Gastrocnemius medialis (tissue), 4 donors: ENCODE measurements at regions of chr6 and their contacts with region 1.

Region 1: DNA sequence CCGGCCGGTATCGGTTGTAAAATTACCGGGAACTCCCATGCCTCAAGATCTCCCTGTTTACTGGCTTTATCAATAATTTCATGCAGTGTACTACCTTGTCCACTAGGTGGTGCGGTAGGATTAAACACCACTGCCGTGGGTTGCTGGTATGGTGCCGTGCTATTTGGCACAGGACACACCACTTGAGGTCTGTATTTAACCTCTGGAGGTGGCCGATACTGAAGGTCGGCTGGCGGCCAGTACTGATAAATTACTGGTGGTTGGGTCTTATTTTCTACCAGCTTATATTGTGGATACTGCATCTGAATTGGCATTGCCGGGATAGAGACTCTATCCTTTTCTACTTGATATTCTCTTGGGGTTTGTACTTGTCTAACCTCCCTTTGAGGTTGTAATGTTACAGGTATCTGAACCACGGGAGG is 14.3 kb upstream of the PTCRA start:
- DNase-seq: peak; percentile 60 to 76
- ATAC-seq: peak; percentile 92 to 99
- H3K4me3 ChIP-seq: no peak overlapping the region
- H3K27ac ChIP-seq: no peak overlapping the region
- H3K4me1 ChIP-seq: peaks cover 20 to 27% of the 10 kb centered on the region in 2 donors
- H3K27me3 ChIP-seq: no peaks in the 10 kb centered on the region
- CTCF ChIP-seq: peak; percentile 85 to 93 (median 90)
- POLR2A ChIP-seq: no peak

Region 2: GRCh38 chr6:42661540-42662153 is 239.9 kb before region 1 on chr6:
- in situ Hi-C with region 1: no loop called
- intact Hi-C with region 1: loop called (anchors 2 kb)
- DNase-seq: peak; percentile 53 to 83
- ATAC-seq: peak; percentile 86 to 90
- H3K4me3 ChIP-seq: no peak overlapping the region
- H3K27ac ChIP-seq: peak overlapping the region in 3 of 4 donors; percentile 44 to 54 (median 49)
- H3K4me1 ChIP-seq: peaks cover 6 to 13% of the 10 kb centered on the region in 2 donors
- H3K27me3 ChIP-seq: no peaks in the 10 kb centered on the region
- CTCF ChIP-seq: peak; percentile 90 to 95 (median 92)
- POLR2A ChIP-seq: no peak

Region 3: GRCh38 chr6:42978839-42979522 is 77.4 kb after region 1 on chr6 and contains the start of gene PEX6:
- in situ Hi-C with region 1: no loop called
- intact Hi-C with region 1: loop called (anchors 5 kb)
- DNase-seq: peak; percentile 69 to 86
- ATAC-seq: peak; percentile 89 to 92
- H3K4me3 ChIP-seq: peak within 1 kb of the TSS; percentile 72 to 97 (median 81)
- H3K27ac ChIP-seq: peak within 1 kb of the TSS; percentile 85 to 97 (median 92)
- H3K4me1 ChIP-seq: peaks cover 25 to 27% of the 10 kb centered on the region in 2 donors
- H3K27me3 ChIP-seq: no peaks in the 10 kb centered on the region
- CTCF ChIP-seq: no peak
- POLR2A ChIP-seq: peak; percentile 40 to 71
- total RNA-seq, gene PEX6: 7.4 to 45.1 (median 12.6) TPM

Region 4: GRCh38 chr6:43059168-43060033 is 157.9 kb after region 1 on chr6 and contains the starts of genes KLC4 and MRPL2:
- in situ Hi-C with region 1: no loop called
- intact Hi-C with region 1: loop called (anchors 5 kb)
- DNase-seq: peak; percentile 99
- ATAC-seq: peak; percentile 94 to 97
- H3K4me3 ChIP-seq: peak within 1 kb of the TSS; percentile 87 to 98 (median 92)
- H3K27ac ChIP-seq: peak within 1 kb of the TSS; percentile 90 to 99 (median 95)
- H3K4me1 ChIP-seq: peaks cover 24 to 30% of the 10 kb centered on the region in 2 donors
- H3K27me3 ChIP-seq: no peaks in the 10 kb centered on the region
- CTCF ChIP-seq: no peak
- POLR2A ChIP-seq: peak; percentile 72 to 88
- total RNA-seq, gene KLC4: 12.2 to 19.3 (median 14.6) TPM
- total RNA-seq, gene MRPL2: 34.1 to 64.9 (median 41.1) TPM

Region 5: DNA sequence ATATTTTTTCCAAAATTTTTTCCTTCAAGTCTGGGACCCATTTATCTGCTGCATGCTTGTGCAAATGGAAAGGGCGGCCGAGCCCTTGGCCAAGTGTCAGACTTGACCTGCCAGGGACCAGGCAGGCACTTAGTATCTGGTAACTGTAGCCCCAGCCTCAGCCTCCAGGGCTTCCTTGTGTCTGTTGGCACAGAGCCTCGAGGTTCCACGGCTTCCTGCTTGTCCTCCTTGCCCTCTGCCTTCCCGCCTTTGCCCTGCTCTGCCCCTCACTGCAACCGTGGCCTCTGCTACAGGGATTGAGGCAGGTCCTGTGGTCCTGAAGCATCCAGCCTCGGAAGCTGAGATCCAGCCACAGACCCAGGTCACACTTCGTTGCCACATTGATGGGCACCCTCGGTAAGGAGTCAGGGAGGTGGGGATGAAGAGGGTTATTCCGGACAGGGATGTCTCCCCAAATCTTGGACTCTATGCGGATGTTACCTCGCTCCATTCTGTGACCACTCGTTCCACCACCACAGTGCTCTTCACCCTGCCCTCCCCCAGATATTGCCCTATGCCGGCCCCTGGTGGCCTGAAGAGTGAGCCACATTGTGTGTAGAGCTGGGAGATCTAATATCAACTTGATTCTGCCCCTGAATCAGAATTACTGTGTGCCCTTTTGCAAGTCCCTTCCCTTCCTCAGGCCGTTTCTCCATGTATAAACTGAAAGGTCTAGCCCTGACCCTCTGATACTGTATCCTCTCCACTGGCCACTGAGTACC is 228.1 kb after region 1 on chr6:
- in situ Hi-C with region 1: no loop called
- intact Hi-C with region 1: loop called (anchors 5 kb)
- DNase-seq: no peak
- ATAC-seq: peak in 1 of 2 donors; percentile 55
- H3K4me3 ChIP-seq: no peak overlapping the region
- H3K27ac ChIP-seq: no peak overlapping the region
- H3K4me1 ChIP-seq: no peaks in the 10 kb centered on the region
- H3K27me3 ChIP-seq: no peaks in the 10 kb centered on the region
- CTCF ChIP-seq: peak in 3 of 5 experiments; percentile 20 to 32 (median 31)
- POLR2A ChIP-seq: no peak

Region 6: GRCh38 chr6:43143235-43144124 is 241.9 kb after region 1 on chr6:
- in situ Hi-C with region 1: loop called (anchors 5 to 10 kb)
- intact Hi-C with region 1: loop called (anchors 1 kb)
- DNase-seq: peak; percentile 46 to 80
- ATAC-seq: peak; percentile 81 to 86
- H3K4me3 ChIP-seq: peak overlapping the region in 1 of 4 donors; percentile 5
- H3K27ac ChIP-seq: peak overlapping the region in 2 of 4 donors; percentile 31 to 50
- H3K4me1 ChIP-seq: peaks cover 21 to 24% of the 10 kb centered on the region in 2 donors
- H3K27me3 ChIP-seq: no peaks in the 10 kb centered on the region
- CTCF ChIP-seq: peak; percentile 87 to 96 (median 94)
- POLR2A ChIP-seq: no peak

Region 7: DNA sequence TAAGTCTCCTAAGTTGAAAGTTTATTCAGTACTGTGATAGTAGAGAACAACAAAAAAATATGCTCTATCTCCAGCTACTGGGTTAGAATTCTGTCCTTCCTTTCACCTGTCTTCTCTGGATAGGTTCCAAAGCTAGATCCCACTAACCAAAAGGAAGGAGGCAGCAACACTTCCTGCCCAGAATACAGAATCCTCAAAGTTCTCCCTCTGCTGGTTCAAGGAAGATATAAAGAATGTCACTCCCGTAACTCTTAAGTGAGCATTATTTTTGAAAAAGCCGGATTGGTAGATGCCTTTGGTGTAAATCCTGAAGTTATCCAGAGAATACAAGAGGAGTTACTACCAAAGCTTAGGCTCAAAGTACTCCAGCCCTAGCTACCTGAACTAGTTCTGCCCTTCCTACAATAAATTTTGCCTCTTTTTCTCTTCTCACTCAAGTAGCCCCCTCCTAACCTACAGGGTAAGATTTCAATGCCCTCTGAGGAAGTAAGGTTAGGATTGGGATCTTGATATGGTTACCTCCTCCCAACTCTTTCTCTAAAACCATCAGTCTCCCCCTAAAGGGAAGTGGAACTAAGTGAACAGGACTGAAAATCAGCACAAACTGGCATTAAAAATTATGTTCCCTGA is 433.0 kb after region 1 on chr6:
- in situ Hi-C with region 1: loop called in 1 of 4 experiments (anchors 25 kb)
- intact Hi-C with region 1: loop called (anchors 10 kb)
- DNase-seq: no peak
- ATAC-seq: peak in 1 of 2 donors; percentile 69
- H3K4me3 ChIP-seq: no peak overlapping the region
- H3K27ac ChIP-seq: no peak overlapping the region
- H3K4me1 ChIP-seq: peaks cover 6 to 9% of the 10 kb centered on the region in 2 donors
- H3K27me3 ChIP-seq: no peaks in the 10 kb centered on the region
- CTCF ChIP-seq: peak in 4 of 5 experiments; percentile 22 to 42 (median 30)
- POLR2A ChIP-seq: no peak